Activated T-helper 2 cell treated with anti-CD3 and anti-CD28 coated beads, Interferon-gamma antibody, Interleukin-2, Interleukin-4, amounts not matched to agents 10 μg/mL and 5 μg/mL and 100 μg/mL, durations not matched to agents 14 hours and 24 hours and 36 hours (primary cell): ENCODE measurements at regions of chr6 and their contacts with region 1.

Region 1: DNA sequence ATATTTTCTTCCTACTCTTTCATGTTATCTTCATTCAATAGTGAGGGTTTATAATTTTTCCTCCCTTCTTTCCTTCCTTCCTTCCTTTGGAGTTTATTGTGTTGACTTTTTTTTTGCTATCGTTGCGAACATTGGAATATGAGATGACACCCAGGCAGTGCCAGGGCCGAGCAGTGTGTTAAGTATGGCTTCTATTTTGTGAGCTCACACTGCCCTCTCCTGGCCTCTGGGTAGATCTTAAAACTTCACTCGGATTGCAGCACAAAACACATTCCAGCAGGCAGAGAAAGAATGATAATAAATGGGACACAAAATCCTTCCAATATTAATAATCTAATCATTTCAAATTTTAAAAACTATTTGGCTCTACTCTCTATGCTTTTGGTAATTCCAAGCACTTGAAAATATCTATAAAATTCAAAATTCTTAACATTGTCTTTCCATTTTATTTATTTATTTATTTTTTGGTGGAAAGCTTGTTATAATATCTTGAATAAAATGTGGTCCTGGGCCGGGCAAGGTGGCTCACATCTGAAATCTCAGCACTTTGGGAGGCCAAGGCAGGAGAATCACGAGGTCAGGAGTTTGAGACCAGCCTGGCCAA is 147.4 kb upstream of the OLIG3 start:
- DNase-seq: peak; percentile 50
- H3K4me3 Mint-ChIP-seq: no peak overlapping the region
- H3K27ac Mint-ChIP-seq: no peak overlapping the region
- H3K4me1 Mint-ChIP-seq: peaks cover 17% of the 10 kb centered on the region
- H3K27me3 Mint-ChIP-seq: peaks cover 14% of the 10 kb centered on the region

Region 2: GRCh38 chr6:136967876-136968752 is 673.5 kb before region 1 on chr6:
- intact Hi-C with region 1: loop called (anchors 1 kb)
- DNase-seq: peak; percentile 50
- H3K4me3 Mint-ChIP-seq: no peak overlapping the region
- H3K27ac Mint-ChIP-seq: no peak overlapping the region
- H3K4me1 Mint-ChIP-seq: peaks cover 6% of the 10 kb centered on the region
- H3K27me3 Mint-ChIP-seq: peaks cover 45% of the 10 kb centered on the region

Region 3: DNA sequence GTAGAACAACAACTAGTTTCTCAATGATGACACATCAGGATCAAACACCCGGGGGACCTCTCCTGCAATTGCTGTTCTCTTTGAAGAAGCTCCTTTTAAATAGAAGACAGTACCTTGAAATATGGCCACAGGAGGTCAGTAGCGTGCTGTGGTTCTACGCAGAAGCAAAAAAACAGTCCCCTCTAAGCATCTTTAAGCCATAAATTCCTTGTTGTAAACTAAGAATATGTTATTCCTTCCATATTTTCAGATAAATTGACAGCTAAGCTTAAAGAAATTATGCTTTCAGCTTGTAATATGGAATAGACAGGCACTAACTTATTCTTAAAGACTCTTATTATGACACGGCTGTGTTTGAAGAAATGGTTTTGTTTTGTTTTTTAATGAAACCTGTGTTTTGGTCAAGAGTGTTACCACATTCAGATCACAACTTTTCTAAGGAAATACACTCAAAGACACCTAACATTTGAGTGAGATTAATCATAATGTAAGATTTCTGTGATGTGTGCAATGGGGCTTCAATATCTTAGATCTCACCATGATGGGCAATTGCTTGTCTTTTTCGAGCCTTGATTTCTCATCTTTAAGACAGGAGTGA is 547.1 kb before region 1 on chr6:
- intact Hi-C with region 1: loop called (anchors 1 kb)
- DNase-seq: peak; percentile 29
- H3K4me3 Mint-ChIP-seq: no peak overlapping the region
- H3K27ac Mint-ChIP-seq: no peak overlapping the region
- H3K4me1 Mint-ChIP-seq: peaks cover 26% of the 10 kb centered on the region
- H3K27me3 Mint-ChIP-seq: peaks cover 2% of the 10 kb centered on the region

Region 4: DNA sequence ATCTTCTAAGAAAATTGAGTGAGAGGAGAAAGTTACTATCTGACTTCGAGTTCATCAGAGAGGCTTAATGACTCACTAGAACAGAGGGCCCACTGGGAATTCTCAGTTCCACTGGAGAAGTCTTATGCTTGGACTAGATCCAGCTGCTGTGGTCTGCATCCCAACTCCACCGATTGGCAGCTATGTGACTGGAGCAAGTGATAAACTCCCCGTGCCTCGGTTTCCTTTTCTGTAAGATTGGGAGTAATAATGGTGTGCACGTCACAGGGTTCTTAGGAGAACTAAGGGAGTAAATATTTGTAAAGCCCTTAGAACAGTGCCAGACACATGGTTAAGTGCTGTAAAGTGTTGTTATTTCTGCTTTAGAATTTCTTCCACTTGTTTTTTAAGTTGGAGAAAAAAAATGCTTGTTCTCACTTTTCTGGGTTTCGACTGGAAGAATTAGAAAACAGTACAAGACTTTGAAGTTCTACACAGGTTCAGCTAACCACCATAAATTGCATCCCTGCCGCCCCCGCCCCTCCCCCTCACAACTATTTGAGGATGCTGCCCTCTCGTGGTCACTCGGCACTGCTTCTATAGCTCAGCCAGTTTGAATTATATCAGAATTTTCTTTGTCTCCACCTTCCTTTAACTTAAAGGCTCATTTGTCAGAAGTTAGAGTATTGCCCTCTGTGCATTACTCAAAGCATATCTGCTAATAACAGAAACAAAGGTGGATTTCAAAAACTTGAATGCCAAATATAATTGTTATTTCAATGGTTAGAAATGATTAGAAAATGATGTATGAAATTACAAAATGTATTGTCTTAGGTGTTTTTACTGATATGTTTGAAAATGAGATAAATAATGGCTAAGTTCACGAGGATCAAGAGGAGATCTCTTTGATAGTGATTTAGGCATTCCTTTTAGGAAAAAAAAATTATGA is 327.4 kb before region 1 on chr6:
- intact Hi-C with region 1: loop called (anchors 10 kb)
- DNase-seq: peak; percentile 23
- H3K4me3 Mint-ChIP-seq: no peak overlapping the region
- H3K27ac Mint-ChIP-seq: no peak overlapping the region
- H3K4me1 Mint-ChIP-seq: peaks cover 3% of the 10 kb centered on the region
- H3K27me3 Mint-ChIP-seq: peaks cover 18% of the 10 kb centered on the region

Region 5: DNA sequence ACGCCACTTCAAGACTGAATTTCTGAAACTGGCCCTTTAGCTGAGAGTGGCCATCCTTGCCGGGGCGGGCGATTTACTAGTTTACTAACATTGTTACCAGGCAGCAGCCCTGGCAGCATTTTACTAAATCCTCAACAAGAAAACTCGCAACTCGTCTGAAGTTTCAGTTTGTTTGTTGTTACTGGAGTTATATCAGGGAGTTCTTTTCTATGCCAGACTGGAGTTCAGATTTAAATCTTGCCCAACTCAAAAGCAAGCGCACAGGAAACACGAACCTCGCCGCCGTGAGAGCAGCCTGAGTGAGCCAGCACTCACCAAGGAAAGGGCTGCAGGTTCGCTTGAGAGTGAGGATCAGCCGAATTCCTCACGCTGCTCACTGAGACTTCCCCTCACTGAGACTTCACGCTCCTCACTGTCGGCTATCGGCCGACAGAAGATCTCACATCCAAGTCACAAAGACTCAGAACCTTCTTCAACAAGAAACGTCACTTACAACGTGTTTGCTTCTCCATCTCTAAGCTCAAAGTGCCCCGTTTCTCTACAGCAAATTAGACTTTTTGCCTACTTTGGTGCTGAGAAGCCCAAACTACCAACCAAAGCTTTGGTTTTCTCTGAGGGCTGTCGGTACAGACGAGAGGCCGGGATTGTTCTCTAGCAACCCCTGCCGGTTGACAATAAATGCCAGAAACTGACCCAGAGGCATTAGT is 226.3 kb before region 1 on chr6:
- intact Hi-C with region 1: loop called (anchors 10 kb)
- DNase-seq: peak; percentile 54
- H3K4me3 Mint-ChIP-seq: peak overlapping the region; percentile 76
- H3K27ac Mint-ChIP-seq: no peak overlapping the region
- H3K4me1 Mint-ChIP-seq: peaks cover 10% of the 10 kb centered on the region
- H3K27me3 Mint-ChIP-seq: peaks cover 34% of the 10 kb centered on the region